CD14-positive monocyte (primary cell): ENCODE measurements at regions of chr16 and their contacts with region 1.

Region 1: DNA sequence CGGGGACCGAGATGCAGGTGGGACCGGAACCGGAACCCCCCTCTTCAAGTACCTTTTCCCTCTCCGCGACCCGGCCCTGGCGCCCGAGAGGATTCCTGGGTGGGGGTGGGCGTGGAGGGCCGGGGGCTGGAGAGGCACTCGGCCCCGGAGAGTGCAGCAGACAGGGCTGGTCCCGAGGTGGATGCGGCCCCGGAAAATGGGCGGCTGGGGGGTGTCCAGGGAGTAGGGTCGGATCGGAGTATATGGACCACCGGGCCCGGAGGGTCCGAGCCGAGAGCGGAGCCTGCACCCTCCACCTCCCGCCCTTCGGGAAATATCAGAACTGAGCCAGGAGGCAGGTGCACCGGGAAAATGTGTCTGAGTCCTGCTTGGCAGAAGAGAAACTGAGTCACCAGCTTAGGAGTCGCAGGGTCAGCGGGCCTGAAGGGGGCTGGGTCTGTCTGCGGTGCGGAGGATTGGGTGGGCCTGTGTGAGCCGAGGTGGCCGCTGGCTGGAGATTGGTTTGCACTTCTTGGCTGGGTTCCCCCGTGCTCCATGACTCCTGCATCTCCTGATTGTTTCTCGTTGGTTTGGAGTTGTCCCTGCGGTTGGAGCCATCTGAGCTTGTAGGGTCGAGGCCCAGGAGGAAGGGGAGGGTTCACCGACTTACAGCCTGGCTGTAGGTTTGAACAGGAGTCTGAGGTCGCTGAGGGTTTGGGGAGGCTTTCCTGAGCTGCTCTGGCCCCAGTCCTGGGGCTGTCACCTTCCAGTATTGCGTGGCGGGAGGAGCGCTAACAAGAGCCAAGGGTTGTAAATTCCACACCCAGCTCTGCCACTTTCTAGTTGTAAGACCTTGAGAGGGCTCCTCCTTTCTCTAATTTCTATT is 518 bp downstream of the SH2B1 start:
- DNase-seq: no peak
- H3K4me3 ChIP-seq: peak overlapping the region; percentile 66 to 100 (median 97)
- H3K4me3 Mint-ChIP-seq: peak overlapping the region; percentile 93 to 98
- H3K27ac ChIP-seq: peak overlapping the region; percentile 88 to 96
- H3K27ac Mint-ChIP-seq: peak overlapping the region; percentile 91 to 98 (median 96)
- H3K4me1 ChIP-seq: peaks cover 19 to 26% of the 10 kb centered on the region in 2 donors
- H3K4me1 Mint-ChIP-seq: peaks cover 20% of the 10 kb centered on the region
- H3K27me3 ChIP-seq: no peaks in the 10 kb centered on the region
- H3K27me3 Mint-ChIP-seq: no peaks in the 10 kb centered on the region
- CTCF ChIP-seq: no peak

Region 2: GRCh38 chr16:28823872-28824716 is 40.1 kb before region 1 on chr16:
- intact Hi-C with region 1: loop called in 1 of 2 experiments (anchors 5 kb)
- DNase-seq: peak; percentile 91 to 97 (median 97)
- H3K4me3 ChIP-seq: peak overlapping the region; percentile 58 to 94 (median 84)
- H3K4me3 Mint-ChIP-seq: peak overlapping the region; percentile 95 to 98
- H3K27ac ChIP-seq: peak overlapping the region; percentile 87 to 97
- H3K27ac Mint-ChIP-seq: peak overlapping the region; percentile 98 to 99 (median 99)
- H3K4me1 ChIP-seq: peaks cover 30 to 37% of the 10 kb centered on the region in 2 donors
- H3K4me1 Mint-ChIP-seq: peaks cover 24% of the 10 kb centered on the region
- H3K27me3 ChIP-seq: no peaks in the 10 kb centered on the region
- H3K27me3 Mint-ChIP-seq: peaks cover 0 to 1% (median 0%) of the 10 kb centered on the region in 3 donors
- CTCF ChIP-seq: peak; percentile 19